SK-N-SH (cell line): ENCODE measurements at regions of chr19 and their contacts with region 1.

Region 1: DNA sequence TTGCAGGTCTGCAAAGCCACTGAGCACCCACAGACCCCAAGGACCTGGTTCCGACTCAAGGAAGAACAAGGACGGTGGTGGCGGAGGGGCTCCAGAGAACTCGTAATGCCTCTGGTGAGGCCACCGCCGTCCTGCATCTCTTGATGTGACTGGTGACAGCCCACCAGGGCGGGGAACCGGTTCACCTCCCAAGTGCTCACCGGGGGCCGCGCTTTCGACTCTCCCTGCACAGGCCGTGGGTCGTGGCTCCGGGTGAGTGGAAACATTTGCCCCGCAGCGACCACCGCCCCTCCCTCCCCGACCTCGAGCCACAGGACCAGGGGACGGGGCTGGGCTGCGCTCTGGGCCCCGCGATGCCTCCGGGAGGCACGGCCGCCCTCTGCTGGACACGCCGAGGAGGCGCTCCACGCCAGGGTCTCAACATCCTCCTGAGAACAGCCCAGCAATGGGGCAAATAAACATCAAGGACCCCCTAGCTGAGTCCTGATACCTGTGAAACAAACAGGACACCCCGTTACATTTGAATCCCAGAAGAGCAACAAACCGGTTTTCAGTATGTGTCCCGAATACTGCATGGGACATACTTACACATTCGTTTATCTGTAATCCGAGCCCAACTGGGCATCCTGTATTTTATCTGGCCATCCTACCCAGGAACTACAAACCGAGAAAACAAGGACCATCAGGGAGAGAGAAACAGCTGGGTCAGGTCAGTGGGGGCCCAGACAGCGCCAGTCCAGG is 3.9 kb upstream of the PLPP2 start:
- DNase-seq: peak; percentile 65
- H3K4me3 ChIP-seq: no peak overlapping the region
- H3K27ac ChIP-seq: no peak overlapping the region
- H3K4me1 ChIP-seq: no peaks in the 10 kb centered on the region; a peak in 1 of 4 replicates
- H3K27me3 ChIP-seq: no peaks in the 10 kb centered on the region
- CTCF ChIP-seq: peak; percentile 26
- EP300 ChIP-seq: no peak
- RAD21 ChIP-seq: no peak

Region 2: DNA sequence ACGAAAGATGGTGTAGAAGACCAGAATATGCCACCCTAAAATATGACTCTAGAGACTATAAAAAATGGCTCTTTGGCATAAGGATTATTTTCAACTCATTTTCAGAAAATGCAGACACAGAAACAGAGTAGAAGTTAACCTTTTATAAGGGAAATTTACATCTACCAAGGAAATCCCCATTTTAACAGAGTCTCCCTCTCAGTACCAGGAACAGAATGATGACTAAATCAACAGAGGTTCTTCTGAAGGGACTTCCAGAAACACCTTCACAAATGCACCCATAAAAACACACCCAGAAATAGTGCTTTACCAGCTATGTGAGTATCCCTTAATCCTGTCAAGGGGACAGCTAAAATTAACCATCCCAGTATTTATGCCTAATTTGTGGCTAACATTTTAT is 33.0 kb before region 1 on chr19:
- CTCF ChIA-PET with region 1: interaction called, 17 read pairs
- POLR2A ChIA-PET with region 1: no interaction called
- DNase-seq: peak; percentile 0
- H3K4me3 ChIP-seq: no peak overlapping the region
- H3K27ac ChIP-seq: no peak overlapping the region
- H3K4me1 ChIP-seq: peaks cover 0 to 3% of the 10 kb centered on the region in 2 experiments; a peak in 1 of 4 replicates
- H3K27me3 ChIP-seq: no peaks in the 10 kb centered on the region
- CTCF ChIP-seq: no peak
- EP300 ChIP-seq: no peak
- RAD21 ChIP-seq: no peak